H1 (cell line): ENCODE measurements at regions of chr20 and their contacts with region 1.

Region 1: DNA sequence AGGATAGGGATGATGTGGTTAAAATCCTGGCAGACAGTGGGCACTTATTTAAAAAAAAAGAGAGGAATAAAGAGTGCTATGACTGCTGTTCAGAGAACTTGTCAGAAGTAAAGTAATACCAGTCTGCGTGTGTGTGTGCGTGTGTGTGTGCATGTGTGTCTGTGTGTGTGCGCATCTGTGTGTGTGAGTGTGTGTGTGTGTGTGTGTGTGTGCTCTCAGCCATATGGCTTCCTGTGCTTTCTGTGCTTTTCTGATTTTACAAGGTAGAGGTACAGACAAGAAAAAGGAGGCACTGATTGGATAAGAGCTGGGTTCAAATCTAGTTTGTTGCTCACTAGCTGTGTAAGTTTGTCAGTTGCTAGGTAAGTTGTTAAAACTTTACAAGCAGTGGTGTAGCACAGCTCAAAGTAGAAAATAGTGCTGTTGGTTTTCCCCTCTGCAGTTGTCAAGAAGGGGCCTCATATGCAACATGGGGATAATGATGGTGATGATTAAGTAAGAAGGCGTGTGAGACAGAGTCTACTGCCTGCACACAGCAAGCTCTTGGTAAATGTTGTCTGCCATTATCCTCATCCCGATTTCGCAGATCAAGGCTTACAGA is 155.3 kb upstream of the ZNF217 start:
- DNase-seq: no peak
- H3K4me3 ChIP-seq: no peak overlapping the region
- H3K27ac ChIP-seq: no peak overlapping the region
- H3K4me1 ChIP-seq: peaks cover 2 to 24% (median 16%) of the 10 kb centered on the region in 4 experiments
- H3K27me3 ChIP-seq: no peaks in the 10 kb centered on the region
- CTCF ChIP-seq: no peak
- EP300 ChIP-seq: no peak
- POLR2A ChIP-seq: no peak
- RAD21 ChIP-seq: no peak

Region 2: DNA sequence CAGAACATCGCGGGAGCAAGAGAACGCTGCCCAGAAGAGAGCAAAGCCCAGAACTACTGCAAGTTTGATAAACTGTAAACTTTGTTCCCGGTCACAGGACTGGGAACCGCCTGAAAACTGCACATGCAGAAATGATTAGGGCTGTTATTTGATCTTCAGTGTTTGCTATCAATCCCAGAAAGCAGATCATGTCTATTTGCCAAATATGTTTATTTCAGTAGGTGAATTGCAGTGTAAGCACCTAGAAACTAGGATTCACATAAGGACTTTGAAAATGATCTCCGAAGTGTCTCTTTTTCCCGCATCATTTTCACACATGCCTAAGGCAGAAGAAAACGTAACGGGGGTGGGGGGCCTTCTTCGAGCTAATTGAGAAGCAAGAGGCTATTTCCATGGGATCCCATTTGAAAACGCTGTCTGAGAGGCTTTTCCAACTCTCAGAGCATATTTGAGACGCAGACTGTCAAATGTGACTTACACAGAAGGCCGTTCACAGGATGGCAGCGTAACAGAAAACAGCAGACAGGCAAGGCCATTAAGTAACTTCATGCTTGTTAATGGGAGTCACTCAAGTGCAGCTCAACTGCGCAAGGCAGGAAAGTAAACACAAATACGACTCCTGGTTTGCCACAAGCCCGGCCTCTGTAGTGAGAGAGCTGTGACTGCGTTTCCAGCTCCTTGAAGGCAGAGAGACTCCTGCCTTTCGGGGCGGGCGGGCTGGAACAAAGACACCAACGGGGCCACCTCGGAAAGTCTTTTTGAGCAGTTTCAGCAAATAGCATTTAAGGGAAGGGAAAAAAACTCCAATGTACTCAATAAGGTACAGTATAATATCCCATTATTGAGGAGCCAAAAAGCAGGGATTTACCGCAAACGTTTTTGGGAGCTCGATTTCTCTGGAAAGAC is 10.6 kb before region 1 on chr20:
- CTCF ChIA-PET with region 1: interaction called, 10 read pairs
- POLR2A ChIA-PET with region 1: interaction called, 10 read pairs
- DNase-seq: peak in 1 of 2 experiments; percentile 49
- H3K4me3 ChIP-seq: peak overlapping the region in 1 of 4 experiments; percentile 16; a peak in 1 of 8 replicates
- H3K27ac ChIP-seq: peak overlapping the region; percentile 55; the same call in 1 of the 2 replicates
- H3K4me1 ChIP-seq: peaks cover 23 to 40% (median 38%) of the 10 kb centered on the region in 4 experiments
- H3K27me3 ChIP-seq: no peaks in the 10 kb centered on the region
- CTCF ChIP-seq: no peak
- EP300 ChIP-seq: no peak
- POLR2A ChIP-seq: peak in 1 of 2 experiments; percentile 58; a peak in 2 of 3 replicates
- RAD21 ChIP-seq: no peak

Region 3: GRCh38 chr20:53763707-53764414 is 14.9 kb after region 1 on chr20:
- CTCF ChIA-PET with region 1: interaction called, 8 read pairs
- POLR2A ChIA-PET with region 1: interaction called, 13 read pairs
- DNase-seq: peak; percentile 36 to 54
- H3K4me3 ChIP-seq: peak overlapping the region in 1 of 4 experiments; percentile 19; a peak in 1 of 8 replicates
- H3K27ac ChIP-seq: peak overlapping the region; percentile 49; the same call in 1 of the 2 replicates
- H3K4me1 ChIP-seq: peaks cover 10 to 26% (median 18%) of the 10 kb centered on the region in 4 experiments; a peak in 6 of 7 replicates
- H3K27me3 ChIP-seq: no peaks in the 10 kb centered on the region
- CTCF ChIP-seq: no peak
- EP300 ChIP-seq: 0 out of 3 replicates have a peak, but pooled peaks of 1 of the 2 experiments have one; percentile 9
- POLR2A ChIP-seq: peak in 1 of 2 experiments; percentile 39; a peak in 1 of 3 replicates
- RAD21 ChIP-seq: no peak

Region 4: DNA sequence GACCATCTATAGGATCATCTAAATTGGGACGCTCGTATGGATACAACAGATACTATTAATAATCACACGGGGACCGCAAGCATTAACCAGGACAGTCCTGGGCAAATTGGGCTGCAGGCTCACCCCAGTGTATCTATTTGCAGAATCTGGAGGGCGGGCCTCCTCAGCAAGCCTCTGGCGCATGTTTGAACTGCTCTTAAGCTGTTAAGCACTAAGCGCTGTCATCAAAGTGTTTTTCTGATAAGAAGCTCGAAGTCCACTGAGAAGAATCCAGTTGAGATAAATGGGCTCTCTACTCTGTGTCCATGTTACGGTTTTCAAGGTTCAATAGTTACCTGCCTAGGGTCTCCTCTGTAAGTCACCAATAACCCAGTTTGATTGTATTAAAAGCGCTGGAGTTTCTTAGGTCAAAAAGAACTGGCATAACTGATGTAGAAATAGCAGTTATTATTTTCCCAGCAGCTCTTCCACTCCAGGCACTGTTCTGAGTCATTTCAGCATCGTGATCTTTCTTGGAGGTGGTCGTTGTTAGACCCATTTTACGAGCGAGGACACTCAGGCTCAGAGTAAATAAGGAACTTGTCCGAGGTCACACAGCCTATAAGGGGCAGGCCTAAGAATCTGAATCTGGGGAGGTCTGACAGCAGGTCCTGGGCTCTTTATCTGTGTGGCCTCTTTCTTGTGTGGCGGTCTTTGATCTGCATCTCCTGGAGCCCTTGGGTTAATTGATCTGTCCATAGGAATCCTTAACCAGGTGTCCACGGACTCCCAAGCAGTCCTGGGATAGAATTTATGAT is 52.1 kb after region 1 on chr20:
- CTCF ChIA-PET with region 1: no interaction called
- POLR2A ChIA-PET with region 1: no interaction called
- DNase-seq: no peak
- H3K4me3 ChIP-seq: no peak overlapping the region
- H3K27ac ChIP-seq: no peak overlapping the region
- H3K4me1 ChIP-seq: no peaks in the 10 kb centered on the region; a peak in 1 of 7 replicates
- H3K27me3 ChIP-seq: no peaks in the 10 kb centered on the region; a peak in 1 of 7 replicates
- CTCF ChIP-seq: no peak
- EP300 ChIP-seq: no peak
- POLR2A ChIP-seq: no peak
- RAD21 ChIP-seq: no peak

Region 5: GRCh38 chr20:54093423-54094267 is 344.7 kb after region 1 on chr20:
- CTCF ChIA-PET with region 1: no interaction called
- POLR2A ChIA-PET with region 1: no interaction called
- DNase-seq: no peak
- H3K4me3 ChIP-seq: no peak overlapping the region
- H3K27ac ChIP-seq: no peak overlapping the region
- H3K4me1 ChIP-seq: peaks cover 0 to 2% (median 0%) of the 10 kb centered on the region in 4 experiments; a peak in 1 of 7 replicates
- H3K27me3 ChIP-seq: no peaks in the 10 kb centered on the region
- CTCF ChIP-seq: no peak
- EP300 ChIP-seq: no peak
- POLR2A ChIP-seq: no peak
- RAD21 ChIP-seq: no peak